ENCODE measurements at regions of chr11 and their contacts with region 1.

Region 1: DNA sequence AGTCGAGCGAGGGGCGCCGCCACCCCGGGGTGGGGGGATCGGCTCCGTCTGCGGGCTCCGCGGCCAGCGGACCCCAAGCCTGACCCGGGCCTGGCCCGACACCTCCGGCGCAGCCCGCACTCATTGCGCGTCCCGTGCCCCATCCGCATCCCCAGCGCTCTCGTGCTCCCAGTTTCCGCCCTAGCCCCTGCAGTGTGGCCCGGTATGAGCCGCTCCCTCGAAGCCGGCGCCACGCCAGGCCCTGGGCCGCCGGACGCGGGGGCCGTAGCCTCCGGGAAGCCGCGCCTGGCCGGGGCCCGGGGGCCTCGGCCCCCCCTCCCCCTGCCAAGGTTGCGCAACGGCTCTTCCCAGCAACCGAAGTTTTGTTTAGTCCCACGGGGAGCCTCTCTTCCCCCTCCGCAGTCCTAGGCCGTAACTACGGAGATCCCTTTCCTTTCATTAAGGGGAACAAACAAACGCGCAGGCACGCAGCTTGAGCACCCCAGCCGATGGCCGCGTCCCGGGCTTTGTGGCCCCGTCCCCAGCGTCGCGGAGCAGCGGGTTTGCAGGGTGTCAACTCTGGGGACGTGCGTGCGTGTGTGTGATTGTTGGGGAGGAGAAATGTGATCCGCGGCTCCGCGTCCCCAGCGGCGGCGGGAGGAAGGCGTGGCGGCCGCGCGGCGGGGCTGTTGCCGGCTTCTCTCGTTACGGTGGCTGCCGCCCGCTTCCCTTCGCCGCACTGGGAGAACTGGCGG is 883 bp downstream of the HIPK3 start:
- DNase-seq: peak; percentile 86
- ATAC-seq: peak; percentile 62
- H3K4me3 Mint-ChIP-seq: peak overlapping the region; percentile 96
- H3K27ac Mint-ChIP-seq: peak overlapping the region; percentile 92
- H3K4me1 Mint-ChIP-seq: peaks cover 34% of the 10 kb centered on the region
- H3K27me3 Mint-ChIP-seq: no peaks in the 10 kb centered on the region

Region 2: GRCh38 chr11:32821517-32821916 is 436.5 kb before region 1 on chr11:
- CTCF ChIA-PET with region 1: no interaction called
- POLR2A ChIA-PET with region 1: no interaction called
- intact Hi-C with region 1: loop called in 1 of 2 experiments (anchors 5 kb)
- DNase-seq: no peak
- ATAC-seq: peak; percentile 66
- H3K4me3 Mint-ChIP-seq: no peak overlapping the region
- H3K27ac Mint-ChIP-seq: no peak overlapping the region
- H3K4me1 Mint-ChIP-seq: peaks cover 24% of the 10 kb centered on the region
- H3K27me3 Mint-ChIP-seq: no peaks in the 10 kb centered on the region

Region 3: GRCh38 chr11:33015621-33016551 is 242.2 kb before region 1 on chr11 and contains the start of gene DEPDC7:
- CTCF ChIA-PET with region 1: no interaction called
- POLR2A ChIA-PET with region 1: no interaction called
- intact Hi-C with region 1: loop called in 1 of 2 experiments (anchors 5 kb)
- DNase-seq: peak; percentile 90
- ATAC-seq: peak; percentile 81
- H3K4me3 Mint-ChIP-seq: peak within 1 kb of the TSS; percentile 75
- H3K27ac Mint-ChIP-seq: peak within 1 kb of the TSS; percentile 37
- H3K4me1 Mint-ChIP-seq: peaks cover 43% of the 10 kb centered on the region
- H3K27me3 Mint-ChIP-seq: peaks cover 29% of the 10 kb centered on the region
- total RNA-seq, gene DEPDC7: 2.0 to 2.3 TPM

Region 4: GRCh38 chr11:33161120-33162005 is 96.7 kb before region 1 on chr11 and contains the start of gene CSTF3:
- CTCF ChIA-PET with region 1: interaction called, 3 read pairs
- POLR2A ChIA-PET with region 1: no interaction called
- intact Hi-C with region 1: loop called (anchors 1 to 2 kb)
- DNase-seq: peak; percentile 99
- ATAC-seq: peak; percentile 97
- H3K4me3 Mint-ChIP-seq: peak within 1 kb of the TSS; percentile 96
- H3K27ac Mint-ChIP-seq: peak within 1 kb of the TSS; percentile 100
- H3K4me1 Mint-ChIP-seq: peaks cover 43% of the 10 kb centered on the region
- H3K27me3 Mint-ChIP-seq: no peaks in the 10 kb centered on the region
- total RNA-seq, gene CSTF3: 29.6 to 35.3 TPM

Region 5: GRCh38 chr11:33507967-33508366 is 249.9 kb after region 1 on chr11:
- CTCF ChIA-PET with region 1: no interaction called
- POLR2A ChIA-PET with region 1: no interaction called
- intact Hi-C with region 1: no loop called
- DNase-seq: no peak
- ATAC-seq: no peak
- H3K4me3 Mint-ChIP-seq: no peak overlapping the region
- H3K27ac Mint-ChIP-seq: no peak overlapping the region
- H3K4me1 Mint-ChIP-seq: no peaks in the 10 kb centered on the region
- H3K27me3 Mint-ChIP-seq: peaks cover 10% of the 10 kb centered on the region

Region 6: GRCh38 chr11:33700425-33701271 is 442.6 kb after region 1 on chr11 and contains the start of gene C11orf91:
- CTCF ChIA-PET with region 1: no interaction called
- POLR2A ChIA-PET with region 1: no interaction called
- intact Hi-C with region 1: loop called in 1 of 2 experiments (anchors 1 kb)
- DNase-seq: peak; percentile 94
- ATAC-seq: peak; percentile 93
- H3K4me3 Mint-ChIP-seq: peak within 1 kb of the TSS; percentile 74
- H3K27ac Mint-ChIP-seq: peak within 1 kb of the TSS; percentile 45
- H3K4me1 Mint-ChIP-seq: peaks cover 18% of the 10 kb centered on the region
- H3K27me3 Mint-ChIP-seq: peaks cover 16% of the 10 kb centered on the region
- total RNA-seq, gene C11orf91: not detected

Region 7: DNA sequence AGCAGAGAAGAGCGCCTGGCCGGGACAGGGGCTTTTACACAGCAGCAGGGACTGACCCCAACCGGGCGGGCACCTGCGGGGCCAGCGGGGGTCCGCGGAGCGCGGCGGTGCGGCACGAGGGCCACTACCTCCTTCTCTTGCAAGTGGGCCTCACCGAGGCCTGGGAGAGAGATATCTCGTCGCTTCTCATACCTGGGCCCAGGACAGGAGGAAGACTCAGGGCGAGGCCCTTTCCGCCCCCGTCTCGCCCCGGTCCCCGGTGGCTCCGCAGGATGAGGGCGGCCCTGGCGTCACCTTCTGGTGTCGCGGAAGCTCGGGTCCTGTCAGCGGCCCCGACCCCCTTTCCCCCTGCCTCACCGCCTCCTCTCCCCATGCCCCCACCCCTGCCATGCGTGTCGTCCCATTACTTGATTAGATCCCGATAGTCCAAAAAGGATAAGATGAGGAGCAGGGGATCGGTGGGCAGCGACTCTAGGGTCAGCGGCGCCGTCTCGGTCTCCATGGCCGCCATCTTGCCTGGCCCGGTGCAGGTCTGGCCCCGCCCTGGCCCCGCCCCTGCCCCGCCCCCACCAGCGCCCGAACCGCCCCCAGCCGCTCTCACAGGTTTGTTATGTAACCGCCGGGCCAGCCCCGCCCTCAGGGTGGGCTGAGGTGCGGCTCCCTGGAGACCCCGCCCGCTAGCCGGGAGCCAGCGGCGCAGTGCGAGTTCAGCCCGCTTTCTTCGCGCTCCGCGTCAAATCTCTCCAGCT is 516.1 kb after region 1 on chr11 and contains the start of gene FBXO3:
- CTCF ChIA-PET with region 1: no interaction called
- POLR2A ChIA-PET with region 1: no interaction called
- intact Hi-C with region 1: loop called in 1 of 2 experiments (anchors 5 kb)
- DNase-seq: peak; percentile 87
- ATAC-seq: peak; percentile 85
- H3K4me3 Mint-ChIP-seq: peak within 1 kb of the TSS; percentile 89
- H3K27ac Mint-ChIP-seq: peak within 1 kb of the TSS; percentile 75
- H3K4me1 Mint-ChIP-seq: peaks cover 44% of the 10 kb centered on the region
- H3K27me3 Mint-ChIP-seq: peaks cover 12% of the 10 kb centered on the region
- total RNA-seq, gene FBXO3: 11.4 to 12.2 TPM

Region 8: DNA sequence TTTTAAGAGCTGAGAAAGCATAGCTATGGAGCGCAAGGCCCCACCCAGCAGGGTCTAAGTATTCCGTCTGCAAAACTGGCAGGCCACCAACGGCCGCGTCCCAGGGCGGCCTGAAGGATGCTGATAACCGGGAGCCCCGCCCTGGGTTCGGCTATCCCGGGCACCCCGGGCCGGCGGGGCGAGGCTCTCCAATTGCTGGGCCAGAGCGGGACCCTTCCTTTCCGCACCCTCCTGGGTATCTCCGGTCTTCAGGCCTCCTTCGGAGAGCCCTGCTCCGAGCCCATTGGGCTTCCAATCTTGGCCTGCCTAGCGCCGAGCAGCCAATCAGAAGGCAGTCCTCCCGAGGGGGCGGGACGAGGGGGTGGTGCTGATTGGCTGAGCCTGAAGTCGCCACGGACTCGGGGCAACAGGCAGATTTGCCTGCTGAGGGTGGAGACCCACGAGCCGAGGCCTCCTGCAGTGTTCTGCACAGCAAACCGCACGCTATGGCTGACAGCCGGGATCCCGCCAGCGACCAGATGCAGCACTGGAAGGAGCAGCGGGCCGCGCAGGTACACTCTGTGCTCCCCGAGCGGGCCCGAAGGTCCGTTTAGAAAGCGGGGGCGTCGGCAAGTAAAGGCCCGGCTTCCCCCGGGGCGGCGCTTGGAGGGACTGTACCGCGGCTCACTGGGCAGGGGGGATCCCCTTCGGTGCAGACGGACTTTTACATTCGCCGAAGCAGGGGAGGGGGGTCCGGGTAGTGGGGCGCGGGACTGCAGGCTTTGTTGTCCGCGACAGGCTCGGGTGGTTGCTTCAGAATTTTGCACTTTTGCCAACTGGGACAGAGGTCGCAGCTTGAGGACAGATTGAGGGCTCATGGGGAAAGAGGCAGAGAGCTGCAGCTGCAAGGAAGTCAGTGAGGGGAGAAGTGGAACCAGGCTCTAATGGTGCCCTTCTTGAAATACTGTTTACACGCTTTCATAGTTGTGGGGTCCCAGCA is 1180.8 kb after region 1 on chr11 and contains the start of gene CAT:
- CTCF ChIA-PET with region 1: no interaction called
- POLR2A ChIA-PET with region 1: no interaction called
- intact Hi-C with region 1: loop called in 1 of 2 experiments (anchors 2 kb)
- DNase-seq: peak; percentile 99
- ATAC-seq: peak; percentile 99
- H3K4me3 Mint-ChIP-seq: peak within 1 kb of the TSS; percentile 86
- H3K27ac Mint-ChIP-seq: peak within 1 kb of the TSS; percentile 93
- H3K4me1 Mint-ChIP-seq: peaks cover 22% of the 10 kb centered on the region
- H3K27me3 Mint-ChIP-seq: no peaks in the 10 kb centered on the region
- total RNA-seq, gene CAT: 25.1 to 25.5 TPM